ENCODE measurements at regions of chr2 and their contacts with region 1.

Region 1: DNA sequence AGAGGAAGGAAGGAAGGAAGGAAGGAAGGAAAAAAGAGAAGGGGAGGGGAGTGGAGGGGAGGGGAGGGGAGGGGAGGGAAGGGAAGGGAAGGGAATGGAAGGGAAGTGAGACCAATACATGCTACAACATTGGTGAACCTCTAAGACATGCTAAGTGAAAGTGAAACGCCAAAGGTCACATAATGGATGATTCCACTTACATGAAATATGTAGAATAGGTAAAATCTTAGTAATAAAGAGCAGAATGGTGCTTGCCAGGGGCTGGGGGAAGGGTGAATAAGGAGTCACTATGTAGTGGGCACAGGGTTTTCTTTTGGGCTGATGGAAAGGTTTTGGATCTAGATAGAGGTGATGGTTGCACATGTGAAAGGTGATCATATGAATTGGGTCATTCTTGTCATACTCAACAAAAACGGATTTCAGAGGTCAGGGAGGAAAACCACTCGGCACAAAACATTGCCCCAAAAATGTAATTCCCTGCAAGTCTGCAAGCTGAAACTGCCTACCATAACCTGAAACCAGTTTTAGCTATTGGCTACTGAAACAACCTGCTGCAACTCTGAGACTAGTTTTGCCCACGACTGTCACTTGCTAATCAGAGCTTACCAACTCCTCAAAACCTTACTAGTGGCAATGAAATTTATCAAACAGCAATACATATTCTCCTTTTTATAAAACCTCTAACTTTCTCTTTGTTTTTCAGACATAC is 59.2 kb downstream of the CCDC141 start:
- DNase-seq: no peak
- ATAC-seq: no peak
- H3K4me3 ChIP-seq: no peak overlapping the region
- H3K27ac ChIP-seq: no peak overlapping the region
- H3K4me1 ChIP-seq: no peaks in the 10 kb centered on the region
- H3K27me3 ChIP-seq: no peaks in the 10 kb centered on the region
- CTCF ChIP-seq: no peak

Region 2: DNA sequence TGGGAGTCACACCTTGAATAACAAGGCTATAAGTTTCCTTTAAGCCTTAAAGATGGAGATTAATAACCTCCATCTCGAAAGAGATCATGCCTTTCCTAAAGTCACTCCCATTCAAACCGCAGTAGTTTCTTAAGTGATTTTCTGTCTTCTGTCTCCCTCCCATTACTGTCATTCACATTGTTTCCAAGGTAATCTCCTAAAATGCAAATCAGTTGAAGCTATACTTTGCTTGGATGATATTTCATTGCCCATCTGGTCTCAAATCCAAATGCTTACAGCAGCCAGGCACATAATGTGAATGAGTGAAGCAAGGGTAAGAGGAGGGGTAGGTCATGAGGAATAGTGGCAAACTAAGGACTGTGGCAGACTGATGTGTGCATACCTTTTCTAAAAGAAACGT is 57.2 kb before region 1 on chr2:
- CTCF ChIA-PET with region 1: no interaction called
- POLR2A ChIA-PET with region 1: no interaction called
- intact Hi-C with region 1: no loop called
- DNase-seq: no peak
- ATAC-seq: no peak
- H3K4me3 ChIP-seq: no peak overlapping the region
- H3K27ac ChIP-seq: no peak overlapping the region
- H3K4me1 ChIP-seq: no peaks in the 10 kb centered on the region
- H3K27me3 ChIP-seq: no peaks in the 10 kb centered on the region
- CTCF ChIP-seq: no peak

Region 3: DNA sequence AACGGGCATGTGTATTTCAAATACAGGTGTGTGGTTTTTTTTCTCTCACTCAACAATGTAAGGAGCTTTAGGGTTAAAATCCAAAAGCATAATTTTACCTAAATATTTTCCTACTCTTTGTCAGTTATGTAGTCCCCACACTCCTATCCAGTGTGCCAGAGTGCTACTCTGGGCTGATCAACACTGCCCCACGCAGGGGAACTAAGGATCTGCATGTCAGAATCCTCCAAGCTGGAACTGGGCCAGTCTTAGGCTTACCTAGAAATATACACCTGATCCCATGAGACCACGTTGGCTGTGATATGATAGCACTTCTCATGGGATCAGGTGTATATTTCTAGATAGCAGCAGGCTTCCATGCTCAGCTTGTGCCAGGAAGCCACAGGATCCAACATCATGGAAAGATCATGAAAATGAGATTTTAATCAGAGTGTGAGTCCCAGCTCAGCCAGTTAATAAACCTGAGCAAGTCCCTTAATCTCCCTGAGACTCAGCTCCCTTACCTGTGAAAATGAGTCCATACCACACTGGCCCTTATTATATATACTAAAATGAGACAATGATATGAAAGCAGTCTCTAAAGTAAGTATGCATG is 29.6 kb after region 1 on chr2:
- CTCF ChIA-PET with region 1: interaction called, 13 read pairs
- POLR2A ChIA-PET with region 1: no interaction called
- intact Hi-C with region 1: no loop called
- DNase-seq: peak; percentile 81
- ATAC-seq: peak; percentile 79
- H3K4me3 ChIP-seq: no peak overlapping the region
- H3K27ac ChIP-seq: no peak overlapping the region
- H3K4me1 ChIP-seq: no peaks in the 10 kb centered on the region
- H3K27me3 ChIP-seq: no peaks in the 10 kb centered on the region
- CTCF ChIP-seq: peak; percentile 85